ENCODE measurements at regions of chr6 and their contacts with region 1.

Region 1: DNA sequence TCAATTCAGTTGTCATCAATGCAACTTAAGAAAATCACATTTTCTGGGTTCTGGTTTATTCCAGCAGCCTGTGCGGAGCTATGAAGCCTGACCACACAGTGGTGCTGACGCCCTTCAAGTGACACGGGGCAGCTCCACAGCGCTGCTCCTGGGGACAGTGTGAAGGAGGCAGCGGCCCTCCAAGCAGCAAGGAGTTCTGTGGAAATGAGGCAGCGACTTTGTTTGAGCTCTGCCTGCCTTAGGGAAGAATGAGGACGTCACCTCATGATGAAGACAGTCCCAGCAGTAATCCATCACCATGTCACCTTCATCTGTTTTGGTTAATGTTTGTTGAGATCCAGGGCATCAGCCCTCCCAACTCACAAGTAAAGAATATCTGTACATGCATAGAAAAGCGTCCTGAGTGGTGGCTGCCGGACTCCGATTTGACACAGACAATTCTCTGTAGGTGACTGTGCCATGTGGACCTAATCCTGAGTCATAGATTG is 168.5 kb upstream of the UST start:
- DNase-seq: peak; percentile 68
- ATAC-seq: peak; percentile 95
- H3K4me3 Mint-ChIP-seq: no peak overlapping the region
- H3K27ac Mint-ChIP-seq: no peak overlapping the region
- H3K4me1 Mint-ChIP-seq: peaks cover 3% of the 10 kb centered on the region
- H3K27me3 Mint-ChIP-seq: peaks cover 30% of the 10 kb centered on the region
- CTCF ChIP-seq: peak; percentile 63

Region 2: DNA sequence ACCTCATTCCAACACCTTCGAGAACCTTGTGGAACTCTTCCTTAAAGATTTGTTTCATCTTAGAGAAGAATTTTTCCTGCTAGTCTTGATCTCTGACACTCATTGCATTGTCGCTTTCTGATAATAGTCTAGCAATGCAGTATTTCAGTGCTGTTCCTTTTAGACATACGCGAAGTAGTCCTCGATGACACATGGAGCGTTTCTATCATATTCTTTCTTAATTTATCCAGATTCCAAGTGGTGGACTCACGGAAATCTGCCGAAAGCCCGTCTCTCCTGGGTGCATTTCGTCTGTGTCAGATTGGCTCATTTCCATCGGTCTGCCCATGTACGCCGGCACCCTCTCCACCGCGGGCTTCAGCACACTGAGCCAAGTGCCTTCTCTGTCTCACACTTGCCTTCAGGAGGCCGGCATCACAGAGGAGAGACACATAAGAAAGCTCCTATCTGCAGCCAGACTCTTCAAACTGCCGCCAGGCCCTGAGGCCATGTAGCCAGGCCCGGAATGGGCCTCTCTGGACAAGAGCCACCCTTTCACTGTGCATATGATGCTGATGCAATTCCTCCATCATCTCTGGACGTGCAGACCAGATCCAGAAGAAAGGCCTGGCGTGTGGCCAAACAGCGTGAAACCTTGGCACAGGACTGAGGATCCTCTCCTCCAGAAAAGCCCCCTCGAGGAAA is 30.1 kb before region 1 on chr6:
- CTCF ChIA-PET with region 1: no interaction called
- POLR2A ChIA-PET with region 1: no interaction called
- intact Hi-C with region 1: no loop called
- DNase-seq: no peak
- ATAC-seq: no peak
- H3K4me3 Mint-ChIP-seq: no peak overlapping the region
- H3K27ac Mint-ChIP-seq: no peak overlapping the region
- H3K4me1 Mint-ChIP-seq: no peaks in the 10 kb centered on the region
- H3K27me3 Mint-ChIP-seq: peaks cover 3% of the 10 kb centered on the region
- CTCF ChIP-seq: no peak

Region 3: DNA sequence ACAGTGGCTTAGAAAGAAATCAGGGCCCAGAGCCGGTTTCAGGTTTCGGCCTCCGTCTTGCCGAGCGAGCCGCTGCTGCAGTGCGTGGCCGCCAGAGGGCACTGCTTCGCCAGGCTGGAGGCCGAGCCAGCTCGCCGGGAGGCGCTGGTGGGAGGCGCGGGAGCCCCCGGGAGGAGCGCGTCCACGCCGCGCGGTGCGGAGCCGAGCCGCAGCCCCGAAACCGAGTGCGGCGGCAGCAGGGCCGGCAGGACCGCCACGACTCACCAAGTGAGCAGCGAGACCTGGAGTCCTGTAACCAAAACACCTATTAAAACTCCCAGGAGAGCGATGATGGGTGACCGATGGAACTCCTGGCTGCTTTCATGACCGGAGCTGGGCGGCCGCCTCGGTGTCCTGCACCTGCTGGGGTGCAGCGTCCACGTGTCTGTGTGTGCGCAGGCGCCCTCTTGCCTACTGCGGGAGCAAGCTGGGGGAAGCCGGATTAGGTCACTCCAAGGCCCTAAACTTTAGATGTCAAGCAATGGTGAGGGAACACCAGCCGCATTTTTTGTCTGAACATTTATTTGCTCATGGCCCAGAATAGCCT is 18.3 kb before region 1 on chr6:
- CTCF ChIA-PET with region 1: interaction called, 30 read pairs
- POLR2A ChIA-PET with region 1: no interaction called
- intact Hi-C with region 1: no loop called
- DNase-seq: peak; percentile 71
- ATAC-seq: peak; percentile 92
- H3K4me3 Mint-ChIP-seq: no peak overlapping the region
- H3K27ac Mint-ChIP-seq: no peak overlapping the region
- H3K4me1 Mint-ChIP-seq: peaks cover 7% of the 10 kb centered on the region
- H3K27me3 Mint-ChIP-seq: peaks cover 23% of the 10 kb centered on the region
- CTCF ChIP-seq: peak; percentile 90

Region 4: DNA sequence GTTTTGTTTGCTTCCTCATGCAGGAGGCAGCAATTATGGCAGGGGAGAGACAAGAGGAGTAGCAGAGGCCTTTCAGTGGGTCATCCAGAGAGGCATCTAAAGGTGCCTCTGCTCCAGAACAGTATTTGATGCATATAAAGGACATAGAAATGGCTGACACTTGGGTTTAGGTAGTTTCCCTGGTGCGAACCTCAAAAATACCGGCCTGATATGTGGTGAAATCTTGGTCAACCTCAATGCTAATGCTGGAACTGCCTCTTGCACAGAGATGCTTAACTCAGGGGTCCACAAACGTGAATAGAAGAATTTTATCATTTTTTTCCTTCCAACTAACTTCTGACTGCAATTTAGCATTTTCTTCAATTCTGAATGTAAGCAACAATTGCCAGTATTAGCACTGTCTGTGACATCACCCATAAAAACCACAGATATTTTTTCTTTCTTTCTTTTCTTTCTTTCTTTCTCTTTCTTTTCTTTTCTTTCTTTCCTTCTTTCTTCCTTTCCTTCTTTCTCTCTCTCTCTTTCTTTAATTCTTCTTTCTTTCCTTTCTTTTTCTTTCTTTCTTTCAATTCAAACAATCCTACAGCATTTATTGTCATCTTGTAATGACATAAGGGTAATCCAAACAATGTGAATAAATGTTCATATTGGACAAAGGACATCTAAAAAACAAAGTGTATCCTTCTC is 11.5 kb before region 1 on chr6:
- CTCF ChIA-PET with region 1: interaction called, 30 read pairs
- POLR2A ChIA-PET with region 1: no interaction called
- intact Hi-C with region 1: no loop called
- DNase-seq: peak; percentile 10
- ATAC-seq: peak; percentile 28
- H3K4me3 Mint-ChIP-seq: no peak overlapping the region
- H3K27ac Mint-ChIP-seq: no peak overlapping the region
- H3K4me1 Mint-ChIP-seq: peaks cover 13% of the 10 kb centered on the region
- H3K27me3 Mint-ChIP-seq: peaks cover 13% of the 10 kb centered on the region
- CTCF ChIP-seq: peak; percentile 22

Region 5: DNA sequence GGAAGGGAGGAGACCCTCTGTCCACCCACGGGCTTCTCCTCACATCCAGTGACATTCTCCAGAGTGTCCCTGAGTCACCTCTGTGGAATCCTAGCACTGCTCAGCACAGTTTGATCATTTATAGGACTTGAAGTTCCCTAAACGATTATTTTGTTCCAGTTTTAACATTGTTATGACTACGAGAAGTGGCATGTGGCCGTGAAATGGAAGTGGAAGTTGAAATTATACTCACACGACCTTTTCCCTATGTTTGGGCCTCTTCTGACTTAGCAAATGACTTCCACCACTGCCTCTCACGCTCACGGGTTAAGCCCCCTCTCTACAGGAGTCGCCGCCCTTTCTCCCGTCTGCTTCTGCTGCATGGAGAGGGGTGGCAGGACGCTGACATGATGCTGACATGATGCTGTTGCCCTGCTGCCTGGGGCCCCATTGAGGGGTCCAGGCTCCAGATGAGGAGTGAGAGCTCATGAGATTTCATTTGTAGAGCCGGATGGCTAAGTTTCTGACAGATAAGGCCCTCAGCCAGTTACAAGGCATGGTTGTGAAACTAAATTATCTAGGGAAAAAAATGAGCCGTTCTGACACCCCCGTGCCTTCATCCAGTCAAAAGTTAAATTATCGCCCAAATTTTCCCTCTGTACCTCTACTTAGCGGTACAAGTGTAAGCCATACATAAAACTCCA is 15.0 kb after region 1 on chr6:
- CTCF ChIA-PET with region 1: interaction called, 10 read pairs
- POLR2A ChIA-PET with region 1: no interaction called
- intact Hi-C with region 1: no loop called
- DNase-seq: no peak
- ATAC-seq: no peak
- H3K4me3 Mint-ChIP-seq: no peak overlapping the region
- H3K27ac Mint-ChIP-seq: no peak overlapping the region
- H3K4me1 Mint-ChIP-seq: peaks cover 2% of the 10 kb centered on the region
- H3K27me3 Mint-ChIP-seq: peaks cover 9% of the 10 kb centered on the region
- CTCF ChIP-seq: no peak

Region 6: GRCh38 chr6:148947621-148948444 is 369.5 kb after region 1 on chr6:
- CTCF ChIA-PET with region 1: interaction called, 10 read pairs
- POLR2A ChIA-PET with region 1: no interaction called
- intact Hi-C with region 1: loop called (anchors 5 kb)
- DNase-seq: peak; percentile 87
- ATAC-seq: peak; percentile 92
- H3K4me3 Mint-ChIP-seq: no peak overlapping the region
- H3K27ac Mint-ChIP-seq: no peak overlapping the region
- H3K4me1 Mint-ChIP-seq: no peaks in the 10 kb centered on the region
- H3K27me3 Mint-ChIP-seq: peaks cover 2% of the 10 kb centered on the region
- CTCF ChIP-seq: peak; percentile 89

Measured in activated CD8-positive, alpha-beta T cell treated with anti-CD3 and anti-CD28 coated beads for 36 hours (primary cell).